Body of pancreas (tissue), 4 donors: ENCODE measurements at regions of chr7 and their contacts with region 1.

Region 1: DNA sequence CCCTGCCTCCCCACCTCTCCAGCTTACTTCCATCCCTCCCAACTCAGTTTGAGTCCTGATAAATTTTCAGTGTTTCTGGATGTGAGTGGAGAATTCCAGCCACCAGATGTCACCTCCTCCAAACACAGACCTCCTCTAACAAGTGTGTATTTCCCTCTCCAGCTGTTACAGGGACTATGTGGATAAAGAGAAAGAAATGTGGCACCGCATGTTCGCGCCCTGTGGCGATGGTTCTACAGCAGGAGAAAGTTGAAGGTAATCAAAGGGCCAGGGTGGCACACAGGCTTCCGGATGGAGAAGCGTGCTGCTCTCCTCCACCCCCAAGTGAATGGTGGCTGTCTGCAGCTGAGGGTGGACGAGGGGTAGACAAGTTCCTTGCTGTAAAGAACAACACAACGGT is 14.7 kb downstream of the FKBP6 start:
- DNase-seq: peak; percentile 40 to 56 (median 50)
- ATAC-seq: peak; percentile 92
- H3K4me3 ChIP-seq: no peak overlapping the region
- H3K27ac ChIP-seq: no peak overlapping the region
- H3K4me1 ChIP-seq: peaks cover 8% of the 10 kb centered on the region
- H3K27me3 ChIP-seq: no peaks in the 10 kb centered on the region
- CTCF ChIP-seq: peak in 6 of 7 experiments; percentile 27 to 75 (median 70)
- POLR2A ChIP-seq: no peak

Region 2: DNA sequence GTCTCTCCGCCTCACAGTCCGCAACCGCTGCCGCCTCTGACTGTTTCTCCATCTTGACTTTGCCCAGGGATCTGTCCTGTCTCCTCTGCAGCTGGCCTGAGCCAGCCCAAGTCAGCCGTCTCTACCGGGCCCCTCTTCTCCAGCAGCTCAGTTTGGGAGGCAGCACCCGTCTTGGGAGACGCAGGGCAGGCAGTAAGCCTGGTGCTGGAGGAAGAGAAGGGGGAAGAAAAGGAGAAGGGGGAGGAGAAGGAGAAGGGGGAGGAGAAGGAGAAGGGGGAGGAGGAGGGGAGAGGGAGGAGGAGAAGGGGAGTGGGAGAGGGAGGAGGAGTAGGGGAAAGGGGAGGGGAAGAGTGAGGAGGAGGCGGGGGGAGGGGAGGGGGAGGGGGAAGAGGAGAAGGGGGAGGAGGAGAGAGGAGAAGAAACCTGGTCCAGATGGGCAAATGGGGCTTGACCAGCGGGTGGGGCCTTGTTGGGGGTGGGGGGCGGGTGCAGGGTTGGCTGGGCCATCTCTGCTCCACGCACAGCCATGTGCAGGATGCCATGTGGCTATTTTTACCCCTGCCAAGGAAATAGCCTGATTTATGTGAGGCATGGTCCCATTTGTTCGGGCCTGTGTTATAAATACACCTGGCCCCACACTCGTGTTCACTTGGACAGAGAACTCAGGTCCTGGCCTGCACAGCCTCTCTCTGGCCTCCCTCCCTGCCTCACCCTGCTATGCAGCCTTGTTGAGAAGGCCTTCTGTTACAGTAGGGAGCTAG is 55.1 kb after region 1 on chr7:
- intact Hi-C with region 1: no loop called
- DNase-seq: no peak
- ATAC-seq: no peak
- H3K4me3 ChIP-seq: no peak overlapping the region
- H3K27ac ChIP-seq: no peak overlapping the region
- H3K4me1 ChIP-seq: no peaks in the 10 kb centered on the region
- H3K27me3 ChIP-seq: no peaks in the 10 kb centered on the region
- CTCF ChIP-seq: no peak
- POLR2A ChIP-seq: no peak

Region 3: DNA sequence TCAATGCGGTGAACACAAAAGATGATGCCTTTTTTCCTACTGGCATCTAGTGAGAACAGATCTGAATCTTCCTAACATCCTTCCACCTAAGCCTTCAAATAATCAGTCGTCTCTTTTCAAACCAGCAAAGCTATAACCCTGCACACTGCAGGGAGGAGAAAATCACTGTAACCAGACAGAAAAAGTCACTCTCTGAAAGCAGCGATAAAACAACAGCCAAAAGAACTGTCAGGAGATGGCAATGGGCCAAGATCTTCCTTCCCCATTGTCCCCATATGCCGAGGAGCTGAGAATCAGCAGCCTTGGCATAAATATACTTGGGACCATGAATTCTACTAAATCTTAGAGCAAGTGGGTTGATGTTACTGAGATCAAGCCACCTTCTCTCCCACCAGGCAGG is 104.0 kb after region 1 on chr7:
- intact Hi-C with region 1: loop called (anchors 5 kb)
- DNase-seq: no peak
- ATAC-seq: no peak
- H3K4me3 ChIP-seq: no peak overlapping the region
- H3K27ac ChIP-seq: no peak overlapping the region
- H3K4me1 ChIP-seq: no peaks in the 10 kb centered on the region
- H3K27me3 ChIP-seq: no peaks in the 10 kb centered on the region
- CTCF ChIP-seq: no peak
- POLR2A ChIP-seq: no peak